PC-9 (cell line): ENCODE measurements at regions of chr15 and their contacts with region 1.

Region 1: GRCh38 chr15:90931737-90932659 is at the start of gene HDDC3:
- DNase-seq: peak; percentile 84 to 89
- H3K4me3 ChIP-seq: peak within 1 kb of the TSS; percentile 88
- H3K27ac ChIP-seq: peak within 1 kb of the TSS; percentile 58
- H3K4me1 ChIP-seq: peaks cover 33% of the 10 kb centered on the region
- H3K27me3 ChIP-seq: no peaks in the 10 kb centered on the region
- CTCF ChIP-seq: peak; percentile 88
- total RNA-seq, gene HDDC3: 18.1 and 20.9 TPM in 2 replicates

Region 2: GRCh38 chr15:90101969-90102890 is 829.8 kb before region 1 on chr15 and contains the start of gene IDH2:
- CTCF ChIA-PET with region 1: no interaction called
- POLR2A ChIA-PET with region 1: no interaction called
- intact Hi-C with region 1: loop called (anchors 5 kb)
- DNase-seq: peak; percentile 59 to 84
- H3K4me3 ChIP-seq: peak within 1 kb of the TSS; percentile 80
- H3K27ac ChIP-seq: no peak within 1 kb of the TSS
- H3K4me1 ChIP-seq: peaks cover 89% of the 10 kb centered on the region
- H3K27me3 ChIP-seq: no peaks in the 10 kb centered on the region
- CTCF ChIP-seq: no peak
- total RNA-seq, gene IDH2: 87.9 and 96.7 TPM in 2 replicates

Region 3: DNA sequence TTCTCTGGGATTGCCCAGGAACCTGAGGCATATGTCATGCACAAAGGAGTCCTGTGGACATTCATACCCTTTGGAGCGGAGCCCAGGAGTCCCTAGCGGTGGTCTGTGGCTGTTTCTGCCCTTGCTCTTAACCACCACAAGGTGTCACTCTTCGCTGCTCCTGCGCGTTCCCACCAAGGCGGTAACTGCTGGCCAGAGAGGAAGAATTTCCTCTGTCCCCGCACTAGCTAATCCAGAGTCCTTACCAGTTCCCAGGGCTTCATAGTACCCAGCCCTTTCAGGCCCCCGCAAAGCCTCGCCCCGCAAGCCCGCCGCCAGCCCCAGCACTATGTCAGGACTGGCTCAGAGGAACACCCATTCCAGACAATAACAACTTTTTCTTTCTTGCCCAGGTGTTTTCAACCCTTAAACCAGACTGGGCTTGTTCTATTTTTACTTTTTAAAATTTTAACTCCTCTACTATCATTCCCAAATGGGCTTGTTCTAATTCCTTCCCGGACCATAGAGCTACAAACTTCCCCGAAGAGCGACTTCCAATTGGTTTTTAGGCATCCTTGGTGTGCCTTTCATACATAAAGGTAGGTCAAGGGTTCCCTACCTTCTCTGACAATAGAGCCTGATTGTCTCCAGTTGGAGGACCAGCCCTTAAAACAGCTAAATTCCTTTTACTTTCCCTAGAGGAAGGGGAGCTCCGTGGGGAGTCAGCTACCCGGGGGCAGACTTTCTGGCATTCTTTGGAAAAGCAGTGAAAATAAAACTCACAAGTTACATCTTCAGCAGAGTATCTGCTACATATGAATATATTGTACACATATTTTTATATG is 611.7 kb before region 1 on chr15:
- CTCF ChIA-PET with region 1: interaction called, 4 read pairs
- POLR2A ChIA-PET with region 1: no interaction called
- intact Hi-C with region 1: loop called (anchors 5 kb)
- DNase-seq: peak; percentile 79 to 84
- H3K4me3 ChIP-seq: peak overlapping the region; percentile 29; the same call in 1 of the 2 replicates
- H3K27ac ChIP-seq: peak overlapping the region; percentile 31; the same call in 1 of the 2 replicates
- H3K4me1 ChIP-seq: peaks cover 26% of the 10 kb centered on the region
- H3K27me3 ChIP-seq: no peaks in the 10 kb centered on the region
- CTCF ChIP-seq: peak; percentile 91

Region 4: GRCh38 chr15:90716976-90717821 is 214.8 kb before region 1 on chr15 and contains the start of gene BLM:
- CTCF ChIA-PET with region 1: no interaction called
- POLR2A ChIA-PET with region 1: no interaction called
- intact Hi-C with region 1: loop called (anchors 5 kb)
- DNase-seq: peak; percentile 88 to 95
- H3K4me3 ChIP-seq: peak within 1 kb of the TSS; percentile 74
- H3K27ac ChIP-seq: peak within 1 kb of the TSS; percentile 50; the same call in 1 of the 2 replicates
- H3K4me1 ChIP-seq: peaks cover 12% of the 10 kb centered on the region
- H3K27me3 ChIP-seq: no peaks in the 10 kb centered on the region
- CTCF ChIP-seq: no peak; the same call in 1 of the 2 replicates
- total RNA-seq, gene BLM: 15.1 and 19.1 TPM in 2 replicates

Region 5: GRCh38 chr15:90948506-90948905 is 16.5 kb after region 1 on chr15:
- CTCF ChIA-PET with region 1: interaction called, 15 read pairs
- POLR2A ChIA-PET with region 1: interaction called, 5 read pairs
- intact Hi-C with region 1: no loop called
- DNase-seq: no peak
- H3K4me3 ChIP-seq: no peak overlapping the region
- H3K27ac ChIP-seq: no peak overlapping the region
- H3K4me1 ChIP-seq: peaks cover 6% of the 10 kb centered on the region; the same call in 1 of the 2 replicates
- H3K27me3 ChIP-seq: no peaks in the 10 kb centered on the region
- CTCF ChIP-seq: no peak

Region 6: GRCh38 chr15:91032919-91033803 is 101.2 kb after region 1 on chr15:
- CTCF ChIA-PET with region 1: interaction called, 4 read pairs
- POLR2A ChIA-PET with region 1: no interaction called
- intact Hi-C with region 1: loop called (anchors 1 kb)
- DNase-seq: peak; percentile 74 to 88
- H3K4me3 ChIP-seq: no peak overlapping the region
- H3K27ac ChIP-seq: no peak overlapping the region
- H3K4me1 ChIP-seq: no peaks in the 10 kb centered on the region
- H3K27me3 ChIP-seq: peaks cover 21% of the 10 kb centered on the region; the same call in 1 of the 2 replicates
- CTCF ChIP-seq: peak; percentile 83